H1 (cell line): ENCODE measurements at regions of chr7 and their contacts with region 1.

Region 1: DNA sequence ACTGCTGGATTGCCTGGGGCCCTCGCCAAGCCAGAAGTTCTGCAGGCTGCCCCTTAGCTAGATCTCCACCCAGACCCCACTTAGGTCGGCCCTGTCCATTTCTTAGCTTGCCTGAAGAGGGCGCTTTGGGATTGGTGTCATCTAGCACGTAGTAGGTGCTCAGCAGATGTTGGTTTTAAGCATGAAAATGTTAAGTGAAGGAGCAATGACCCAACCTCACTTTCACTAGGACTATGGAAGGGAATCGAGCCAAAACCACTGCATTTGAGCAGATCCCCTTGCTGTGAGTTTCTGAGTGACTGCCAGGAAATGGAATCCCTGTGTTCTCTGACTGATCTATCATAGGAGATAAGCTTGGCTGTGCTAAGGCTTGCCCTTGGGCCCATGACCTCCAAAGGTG is 131.7 kb upstream of the EEPD1 start:
- DNase-seq: peak in 1 of 2 experiments; percentile 73
- H3K4me3 ChIP-seq: no peak overlapping the region
- H3K27ac ChIP-seq: no peak overlapping the region
- H3K4me1 ChIP-seq: no peaks in the 10 kb centered on the region; a peak in 1 of 7 replicates
- H3K27me3 ChIP-seq: no peaks in the 10 kb centered on the region
- CTCF ChIP-seq: peak; percentile 74 to 90 (median 88)
- EP300 ChIP-seq: no peak
- POLR2A ChIP-seq: no peak
- RAD21 ChIP-seq: peak; percentile 80 to 94

Region 2: GRCh38 chr7:36010656-36011587 is 10.4 kb before region 1 on chr7:
- CTCF ChIA-PET with region 1: interaction called, 30 read pairs
- POLR2A ChIA-PET with region 1: no interaction called
- DNase-seq: no peak
- H3K4me3 ChIP-seq: no peak overlapping the region
- H3K27ac ChIP-seq: no peak overlapping the region
- H3K4me1 ChIP-seq: peaks cover 0 to 12% (median 7%) of the 10 kb centered on the region in 4 experiments; a peak in 6 of 7 replicates
- H3K27me3 ChIP-seq: peaks cover 0 to 2% (median 0%) of the 10 kb centered on the region in 4 experiments; a peak in 2 of 7 replicates
- CTCF ChIP-seq: no peak
- EP300 ChIP-seq: no peak
- POLR2A ChIP-seq: no peak
- RAD21 ChIP-seq: no peak

Region 3: GRCh38 chr7:36037121-36037662 is 15.8 kb after region 1 on chr7:
- CTCF ChIA-PET with region 1: interaction called, 45 read pairs
- POLR2A ChIA-PET with region 1: interaction called, 5 read pairs
- DNase-seq: no peak
- H3K4me3 ChIP-seq: no peak overlapping the region
- H3K27ac ChIP-seq: no peak overlapping the region
- H3K4me1 ChIP-seq: peaks cover 3 to 12% (median 3%) of the 10 kb centered on the region in 4 experiments; a peak in 4 of 7 replicates
- H3K27me3 ChIP-seq: no peaks in the 10 kb centered on the region
- CTCF ChIP-seq: no peak
- EP300 ChIP-seq: no peak
- POLR2A ChIP-seq: no peak
- RAD21 ChIP-seq: no peak

Region 4: DNA sequence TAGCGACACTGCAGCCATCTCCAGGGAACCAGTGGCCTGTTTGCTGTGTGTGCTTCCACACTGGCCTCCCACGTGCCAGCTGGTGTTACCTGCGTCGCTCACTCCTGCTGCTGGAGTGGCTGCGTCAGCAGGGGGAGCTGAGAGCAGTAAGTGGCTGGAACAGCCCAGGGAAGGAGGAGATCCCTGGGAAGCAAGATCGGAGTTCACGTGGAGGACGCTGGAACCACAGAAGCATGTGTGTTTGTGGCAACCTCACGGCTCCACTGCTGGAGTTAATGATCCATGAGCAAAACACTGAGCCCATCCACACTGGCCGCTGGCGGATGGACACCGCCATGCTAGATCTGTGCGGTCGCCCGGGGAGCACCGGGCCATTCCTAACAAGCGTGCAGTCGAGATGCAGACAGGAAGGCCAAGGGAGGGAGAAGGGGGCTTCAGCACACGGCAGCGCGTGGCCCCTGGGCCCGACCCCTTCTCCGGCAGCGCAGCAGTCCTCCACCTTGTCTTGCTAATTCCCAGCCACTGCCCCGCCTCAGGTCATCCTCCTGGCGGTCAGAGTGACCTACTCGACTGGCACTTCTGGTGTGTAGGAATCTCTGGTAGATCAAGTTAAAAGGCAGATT is 63.2 kb after region 1 on chr7:
- CTCF ChIA-PET with region 1: interaction called, 13 read pairs
- POLR2A ChIA-PET with region 1: no interaction called
- DNase-seq: peak; percentile 23 to 72
- H3K4me3 ChIP-seq: no peak overlapping the region
- H3K27ac ChIP-seq: no peak overlapping the region
- H3K4me1 ChIP-seq: peaks cover 0 to 5% (median 0%) of the 10 kb centered on the region in 4 experiments; a peak in 2 of 7 replicates
- H3K27me3 ChIP-seq: no peaks in the 10 kb centered on the region; a peak in 2 of 7 replicates
- CTCF ChIP-seq: peak; percentile 59 to 83 (median 71); a peak in 3 of 4 replicates
- EP300 ChIP-seq: peak in 1 of 2 experiments; percentile 92; a peak in 1 of 3 replicates
- POLR2A ChIP-seq: no peak
- RAD21 ChIP-seq: peak; percentile 60 to 74

Region 5: DNA sequence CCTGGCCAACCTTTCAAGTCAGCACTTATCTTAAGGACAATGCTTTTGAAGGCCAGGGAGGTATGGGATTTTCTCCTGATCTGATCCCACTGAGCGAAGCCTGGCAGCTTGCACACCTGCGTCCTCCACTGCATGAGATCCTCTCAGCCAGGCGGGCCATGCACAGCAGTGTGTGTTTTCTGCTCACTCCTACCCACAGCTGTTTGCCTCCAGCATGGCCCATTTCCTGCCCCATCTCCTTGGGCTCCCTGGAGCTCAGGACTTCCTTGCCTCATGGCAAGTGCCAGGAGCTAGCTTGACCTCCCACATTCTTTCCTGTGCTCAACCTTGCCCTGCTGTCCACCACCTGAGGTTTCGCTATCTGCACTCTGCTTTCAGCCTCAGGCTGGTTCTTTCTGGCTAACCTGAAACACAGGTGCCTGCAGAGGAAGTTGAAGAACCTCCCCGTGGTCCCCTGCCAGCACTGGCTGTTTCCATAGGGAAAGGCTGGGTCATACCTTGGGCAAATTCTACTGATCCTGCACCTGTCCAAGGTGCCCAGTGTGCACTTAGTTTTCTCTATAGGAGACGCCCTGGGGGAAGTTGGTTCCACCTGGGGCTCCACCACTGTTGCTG is 87.8 kb after region 1 on chr7:
- CTCF ChIA-PET with region 1: interaction called, 12 read pairs
- POLR2A ChIA-PET with region 1: no interaction called
- DNase-seq: no peak
- H3K4me3 ChIP-seq: no peak overlapping the region
- H3K27ac ChIP-seq: no peak overlapping the region
- H3K4me1 ChIP-seq: no peaks in the 10 kb centered on the region; a peak in 1 of 7 replicates
- H3K27me3 ChIP-seq: no peaks in the 10 kb centered on the region
- CTCF ChIP-seq: no peak
- EP300 ChIP-seq: no peak
- POLR2A ChIP-seq: no peak
- RAD21 ChIP-seq: no peak

Region 6: GRCh38 chr7:36280840-36281812 is 259.8 kb after region 1 on chr7:
- CTCF ChIA-PET with region 1: interaction called, 16 read pairs
- POLR2A ChIA-PET with region 1: no interaction called
- DNase-seq: no peak
- H3K4me3 ChIP-seq: peak overlapping the region in 1 of 4 experiments; percentile 29; a peak in 2 of 8 replicates
- H3K27ac ChIP-seq: peak overlapping the region; percentile 77; the same call in 1 of the 2 replicates
- H3K4me1 ChIP-seq: peaks cover 27 to 63% (median 44%) of the 10 kb centered on the region in 4 experiments
- H3K27me3 ChIP-seq: no peaks in the 10 kb centered on the region
- CTCF ChIP-seq: no peak
- EP300 ChIP-seq: no peak
- POLR2A ChIP-seq: 0 out of 3 replicates have a peak, but pooled peaks of 1 of the 2 experiments have one; percentile 41
- RAD21 ChIP-seq: no peak

Region 7: DNA sequence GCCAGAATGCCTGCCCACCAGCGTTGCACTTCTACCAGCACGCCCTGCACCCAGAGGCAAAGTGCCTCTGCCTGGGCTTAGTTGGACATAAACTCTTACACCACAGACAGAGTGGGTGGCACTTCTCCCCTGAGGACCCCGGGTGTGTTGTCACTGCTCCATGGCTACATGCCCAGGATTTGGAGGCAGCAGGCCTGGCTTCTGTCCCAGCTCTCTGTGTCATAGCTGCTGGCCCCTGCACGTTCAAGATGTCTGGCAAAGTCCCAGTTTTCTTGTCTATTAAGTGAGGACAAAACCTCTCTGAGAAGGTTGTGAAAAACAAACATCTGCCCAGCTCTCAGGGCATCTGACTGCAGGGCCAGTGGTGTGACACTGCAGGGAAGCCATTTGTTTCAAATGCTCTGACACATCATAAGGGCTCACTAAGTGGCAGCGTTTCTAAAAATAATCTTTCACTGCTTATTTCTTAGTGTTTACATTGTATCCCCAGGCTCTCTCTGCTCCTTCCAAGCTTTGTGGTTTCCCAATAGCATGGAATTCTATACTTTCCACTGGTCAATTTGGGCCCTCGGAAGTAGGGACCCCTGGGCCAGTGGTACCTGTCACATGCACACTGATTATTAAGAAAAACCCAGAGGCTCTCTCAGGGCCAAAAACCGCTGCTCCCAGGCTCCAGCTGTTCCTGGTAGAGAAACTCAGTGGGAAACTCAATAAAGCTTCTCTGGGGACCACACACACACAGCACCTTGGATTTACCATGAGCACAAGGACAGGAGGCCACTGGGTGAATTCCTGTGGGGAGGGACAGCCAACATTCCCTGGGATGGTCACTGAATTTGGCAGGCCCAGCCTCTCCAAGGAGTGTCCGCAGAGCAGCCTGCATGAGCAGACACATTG is 282.1 kb after region 1 on chr7:
- CTCF ChIA-PET with region 1: interaction called, 24 read pairs
- POLR2A ChIA-PET with region 1: no interaction called
- DNase-seq: no peak
- H3K4me3 ChIP-seq: no peak overlapping the region
- H3K27ac ChIP-seq: no peak overlapping the region
- H3K4me1 ChIP-seq: peaks cover 0 to 6% (median 0%) of the 10 kb centered on the region in 4 experiments; a peak in 2 of 7 replicates
- H3K27me3 ChIP-seq: no peaks in the 10 kb centered on the region
- CTCF ChIP-seq: no peak
- EP300 ChIP-seq: no peak
- POLR2A ChIP-seq: no peak
- RAD21 ChIP-seq: no peak

Region 8: GRCh38 chr7:36430186-36430585 is 408.8 kb after region 1 on chr7:
- CTCF ChIA-PET with region 1: no interaction called
- POLR2A ChIA-PET with region 1: no interaction called
- DNase-seq: no peak
- H3K4me3 ChIP-seq: no peak overlapping the region
- H3K27ac ChIP-seq: no peak overlapping the region
- H3K4me1 ChIP-seq: no peaks in the 10 kb centered on the region
- H3K27me3 ChIP-seq: no peaks in the 10 kb centered on the region
- CTCF ChIP-seq: no peak
- EP300 ChIP-seq: no peak
- POLR2A ChIP-seq: no peak
- RAD21 ChIP-seq: no peak